Mammary epithelial cell (primary cell): ENCODE measurements at regions of chr16 and their contacts with region 1.

Region 1: DNA sequence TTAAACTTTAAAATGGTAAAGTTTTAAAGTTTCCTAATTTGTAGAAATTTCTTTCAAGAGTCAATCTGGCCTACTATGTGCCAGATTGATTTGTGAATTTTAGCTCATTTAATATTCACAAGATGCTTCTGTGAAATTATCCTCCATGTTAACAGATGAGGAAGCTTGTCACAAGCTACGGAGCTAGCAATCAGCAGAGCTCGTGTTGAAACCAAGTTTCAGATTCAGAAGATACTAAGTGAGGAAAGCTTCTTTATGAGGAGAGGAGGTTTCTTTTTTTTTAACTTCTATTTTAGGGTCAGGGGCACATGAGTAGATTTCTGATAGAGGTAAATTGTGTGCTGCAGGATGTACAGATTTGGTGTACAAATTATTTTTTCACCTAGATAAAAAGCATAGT is 135.9 kb downstream of the HS3ST4 start:
- DNase-seq: no peak
- H3K4me3 ChIP-seq: no peak overlapping the region
- H3K27ac ChIP-seq: no peak overlapping the region
- H3K4me1 ChIP-seq: no peaks in the 10 kb centered on the region
- H3K27me3 ChIP-seq: no peaks in the 10 kb centered on the region
- CTCF ChIP-seq: no peak

Region 2: DNA sequence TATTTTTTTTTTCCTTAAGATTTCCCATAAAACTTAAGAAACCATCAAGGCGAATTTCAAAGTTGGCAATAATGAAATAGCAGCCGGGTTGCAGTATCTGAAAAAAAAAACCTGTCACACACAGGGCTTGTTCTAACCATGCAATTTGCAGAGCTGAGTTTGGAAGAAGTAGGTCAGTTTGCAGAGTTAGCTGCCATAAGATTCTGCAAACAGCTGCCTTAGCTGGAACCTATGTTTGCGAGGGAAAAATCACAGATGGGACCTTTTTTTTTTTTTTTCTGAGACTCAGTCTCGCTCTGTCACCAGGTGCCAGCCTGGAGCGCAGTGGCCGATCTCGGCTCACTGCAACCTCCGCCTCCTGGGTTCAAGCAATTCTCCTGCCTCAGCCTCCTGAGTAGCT is 234.4 kb before region 1 on chr16:
- CTCF ChIA-PET with region 1: no interaction called
- dilution Hi-C with region 1: no loop called
- in situ Hi-C with region 1: no loop called
- intact Hi-C with region 1: no loop called
- DNase-seq: no peak
- H3K4me3 ChIP-seq: no peak overlapping the region
- H3K27ac ChIP-seq: no peak overlapping the region
- H3K4me1 ChIP-seq: no peaks in the 10 kb centered on the region
- H3K27me3 ChIP-seq: no peaks in the 10 kb centered on the region
- CTCF ChIP-seq: no peak

Region 3: DNA sequence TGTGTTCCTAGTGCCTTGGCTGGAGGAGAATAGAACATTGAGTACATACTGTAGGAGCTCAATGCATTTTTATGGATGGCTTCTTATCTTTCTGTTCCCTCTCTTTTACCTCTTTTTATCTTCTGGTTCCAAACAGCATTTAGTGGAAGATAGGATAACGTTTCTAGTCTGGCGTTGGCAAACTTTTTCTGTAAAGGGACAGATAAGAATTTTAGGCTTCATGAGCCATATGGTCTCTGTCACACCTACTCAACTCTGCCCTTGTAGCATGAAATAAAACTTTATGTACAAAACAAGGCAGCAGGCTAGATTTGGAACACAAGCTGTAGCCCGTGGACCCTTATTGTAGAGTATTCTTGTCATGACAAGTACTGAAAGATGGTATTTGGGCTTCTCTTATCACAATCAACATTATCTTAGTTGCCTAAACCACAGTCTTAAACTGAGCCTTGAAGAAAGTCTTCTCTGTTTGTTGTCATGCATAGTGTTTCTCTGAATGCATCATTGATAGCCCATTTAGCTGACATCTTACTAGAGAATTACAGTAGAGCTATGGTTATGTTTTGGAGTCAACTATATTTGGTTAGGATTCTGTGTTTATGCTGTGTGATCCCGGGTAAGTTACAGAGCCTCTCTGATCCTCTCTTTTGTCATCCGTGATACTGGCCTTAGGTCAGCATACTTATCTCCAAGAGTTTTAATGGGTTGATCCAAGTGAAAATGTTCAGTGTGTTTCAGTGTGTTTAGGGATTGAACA is 55.7 kb before region 1 on chr16:
- CTCF ChIA-PET with region 1: no interaction called
- dilution Hi-C with region 1: loop called (anchors 5 kb)
- in situ Hi-C with region 1: no loop called
- intact Hi-C with region 1: no loop called
- DNase-seq: no peak
- H3K4me3 ChIP-seq: no peak overlapping the region
- H3K27ac ChIP-seq: no peak overlapping the region
- H3K4me1 ChIP-seq: no peaks in the 10 kb centered on the region
- H3K27me3 ChIP-seq: no peaks in the 10 kb centered on the region
- CTCF ChIP-seq: no peak

Region 4: GRCh38 chr16:25874196-25874595 is 46.5 kb after region 1 on chr16:
- CTCF ChIA-PET with region 1: no interaction called
- dilution Hi-C with region 1: loop called (anchors 5 kb)
- in situ Hi-C with region 1: no loop called
- intact Hi-C with region 1: no loop called
- DNase-seq: no peak
- H3K4me3 ChIP-seq: no peak overlapping the region
- H3K27ac ChIP-seq: no peak overlapping the region
- H3K4me1 ChIP-seq: no peaks in the 10 kb centered on the region
- H3K27me3 ChIP-seq: no peaks in the 10 kb centered on the region
- CTCF ChIP-seq: no peak

Region 5: DNA sequence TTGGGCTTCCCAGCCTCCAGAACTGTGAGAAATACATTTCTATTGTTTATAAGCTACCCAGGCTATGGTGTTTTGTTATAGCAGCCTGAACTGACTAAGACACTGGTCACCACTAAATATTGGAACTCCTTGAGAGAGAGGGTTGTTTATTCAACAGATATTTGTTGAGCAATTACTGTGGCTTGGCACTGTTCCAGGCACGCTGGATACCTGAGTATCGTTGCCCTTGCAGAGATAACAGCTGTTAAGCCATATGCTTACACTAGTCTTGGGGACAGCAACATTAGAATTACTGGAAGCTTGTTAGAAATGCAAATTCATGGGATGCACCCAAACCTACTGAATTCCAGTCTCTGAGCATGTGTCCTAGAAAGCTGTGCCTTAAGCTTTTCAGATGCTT is 94.7 kb after region 1 on chr16:
- CTCF ChIA-PET with region 1: no interaction called
- dilution Hi-C with region 1: no loop called
- in situ Hi-C with region 1: no loop called
- intact Hi-C with region 1: no loop called
- DNase-seq: no peak
- H3K4me3 ChIP-seq: no peak overlapping the region
- H3K27ac ChIP-seq: no peak overlapping the region
- H3K4me1 ChIP-seq: no peaks in the 10 kb centered on the region
- H3K27me3 ChIP-seq: no peaks in the 10 kb centered on the region
- CTCF ChIP-seq: no peak